ENCODE measurements at regions of chr2 and their contacts with region 1.

Region 1: DNA sequence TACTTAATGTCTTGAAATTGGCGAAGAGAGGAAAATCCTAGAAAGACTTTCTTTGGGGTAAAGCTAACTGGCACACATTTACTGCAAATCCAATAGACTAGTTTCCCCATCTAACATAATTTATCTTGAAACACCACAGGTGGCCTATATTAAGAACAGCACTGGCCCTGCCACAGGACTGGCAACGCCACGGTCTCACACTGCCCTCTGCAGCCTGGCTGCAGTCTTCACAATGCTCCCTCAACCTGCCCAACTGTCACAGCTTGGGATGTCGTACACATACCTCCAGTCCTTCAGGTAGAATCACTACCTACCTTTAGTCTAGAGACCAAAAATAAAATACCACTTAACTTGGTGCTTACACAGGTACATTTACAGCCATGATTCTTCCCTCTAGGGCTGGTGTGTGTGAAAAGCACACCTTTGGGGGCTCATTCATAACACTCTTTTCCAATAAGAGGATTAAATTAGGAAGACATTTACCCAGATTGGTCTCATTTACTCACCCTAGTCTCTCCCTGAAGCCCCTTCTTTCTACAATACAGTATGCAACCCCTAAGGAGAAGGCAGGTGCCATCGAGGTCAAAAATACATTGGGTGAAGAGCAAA is 222.2 kb downstream of the C1D start:
- DNase-seq: peak; percentile 78
- ATAC-seq: peak; percentile 99

Region 2: DNA sequence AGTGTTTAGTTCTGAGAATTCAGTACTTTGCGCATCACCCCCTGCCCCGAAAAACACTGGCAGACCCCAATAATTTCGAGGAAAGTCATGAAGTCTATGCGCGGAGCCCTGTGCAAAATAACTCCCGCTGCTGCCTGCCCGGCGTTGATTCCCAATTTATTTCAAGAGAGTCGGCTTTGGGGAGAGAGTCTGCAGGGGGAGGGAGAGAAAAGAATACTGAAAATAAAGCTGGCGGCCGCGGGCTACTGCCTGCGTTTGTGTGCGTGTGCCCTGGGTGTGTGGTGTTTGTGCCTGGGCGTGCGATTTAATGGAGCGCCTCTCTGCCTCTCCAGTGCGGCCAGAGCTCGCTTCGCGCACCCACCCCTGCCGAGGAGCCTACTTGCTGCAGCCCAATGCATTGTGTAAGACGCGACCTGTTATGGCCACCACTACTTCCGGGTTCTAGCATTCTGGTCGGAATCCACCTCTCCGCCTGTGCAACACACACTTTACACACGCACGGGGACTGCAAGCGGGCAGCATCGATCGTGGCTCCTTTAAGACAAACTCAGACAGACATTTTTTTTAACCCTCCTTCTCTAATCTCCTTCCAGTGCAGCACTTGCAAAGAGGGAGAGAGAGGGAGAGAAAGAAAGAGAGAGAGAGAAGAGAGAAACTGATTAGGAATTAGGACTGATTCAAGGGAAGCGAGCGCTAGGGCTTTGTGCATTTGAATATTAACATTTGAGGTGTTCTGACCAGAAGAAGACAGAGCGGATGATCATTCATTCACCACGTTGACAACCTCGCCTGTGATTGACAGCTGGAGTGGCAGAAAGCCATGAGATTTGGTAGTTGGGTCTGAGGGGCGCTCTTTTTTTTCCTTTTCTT is 1405.7 kb before region 1 on chr2 and contains the start of gene MEIS1:
- intact Hi-C with region 1: loop called (anchors 10 kb)
- DNase-seq: peak; percentile 92
- ATAC-seq: peak; percentile 85
- total RNA-seq, gene MEIS1: 40.8 TPM

Region 3: DNA sequence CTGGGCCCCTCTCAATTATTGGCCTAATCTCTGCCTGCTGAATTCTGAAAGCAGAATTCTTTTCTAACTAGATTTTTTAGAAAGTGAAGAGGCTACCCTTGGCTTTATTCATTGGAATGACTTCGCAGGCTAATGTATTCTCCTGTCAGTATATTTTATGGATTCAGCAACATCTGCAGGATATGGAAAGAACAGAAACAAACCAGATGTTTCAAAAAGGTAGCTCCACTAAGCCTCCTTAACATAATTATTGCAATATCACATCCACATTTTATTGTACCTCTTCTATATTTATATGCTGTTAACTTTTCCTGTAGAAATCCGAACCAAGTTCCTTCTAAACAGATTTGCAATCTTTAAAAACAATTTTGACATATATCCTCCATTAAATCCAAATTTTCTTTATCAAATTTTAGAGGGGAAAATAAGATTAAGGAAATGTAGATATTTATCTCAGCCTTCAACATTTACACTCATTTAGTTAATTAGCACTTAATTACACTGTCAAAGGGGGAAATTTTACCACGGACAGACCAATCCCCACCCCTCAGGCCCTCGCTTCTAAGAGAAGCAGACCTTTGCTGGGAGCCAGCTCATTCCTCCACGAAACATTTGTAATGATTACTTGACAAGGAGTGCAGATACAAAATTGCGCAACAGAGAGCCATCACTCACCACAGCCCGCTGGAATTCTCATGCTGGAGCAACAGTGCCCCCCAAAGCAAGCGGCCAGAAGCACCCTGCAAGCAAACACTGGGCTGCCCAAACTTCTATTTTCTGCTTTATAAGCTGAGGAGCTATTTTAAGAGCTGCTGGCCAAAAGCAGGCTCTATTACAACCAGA is 190.1 kb before region 1 on chr2:
- intact Hi-C with region 1: loop called (anchors 5 kb)
- DNase-seq: peak; percentile 84
- ATAC-seq: peak; percentile 89

Measured in left ventricle myocardium superior (tissue), 1 donor.